Activated CD8-positive, alpha-beta T cell treated with anti-CD3 and anti-CD28 coated beads, Interleukin-2, amount 10 ng/mL, durations not matched to agents 7 days and 5 days (primary cell): ENCODE measurements at regions of chr2 and their contacts with region 1.

Region 1: GRCh38 chr2:113138428-113139322 is 11.3 kb downstream of the IL1RN start:
- DNase-seq: peak; percentile 82
- ATAC-seq: peak; percentile 83
- H3K4me3 Mint-ChIP-seq: peak overlapping the region; percentile 47
- H3K27ac Mint-ChIP-seq: peak overlapping the region; percentile 76
- H3K4me1 Mint-ChIP-seq: peaks cover 34% of the 10 kb centered on the region
- H3K27me3 Mint-ChIP-seq: peaks cover 3% of the 10 kb centered on the region

Region 2: DNA sequence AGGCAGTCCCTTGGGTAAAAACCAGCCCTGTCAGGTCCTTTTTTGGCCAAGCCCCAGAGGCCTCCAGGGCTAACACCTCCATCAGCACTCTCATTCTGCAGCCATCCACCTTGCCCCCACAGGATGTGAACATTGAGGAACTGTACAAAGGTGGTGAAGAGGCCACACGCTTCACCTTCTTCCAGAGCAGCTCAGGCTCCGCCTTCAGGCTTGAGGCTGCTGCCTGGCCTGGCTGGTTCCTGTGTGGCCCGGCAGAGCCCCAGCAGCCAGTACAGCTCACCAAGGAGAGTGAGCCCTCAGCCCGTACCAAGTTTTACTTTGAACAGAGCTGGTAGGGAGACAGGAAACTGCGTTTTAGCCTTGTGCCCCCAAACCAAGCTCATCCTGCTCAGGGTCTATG is 63.6 kb before region 1 on chr2:
- CTCF ChIA-PET with region 1: interaction called, 215 read pairs
- POLR2A ChIA-PET with region 1: no interaction called
- DNase-seq: peak; percentile 71
- ATAC-seq: peak; percentile 97
- H3K4me3 Mint-ChIP-seq: no peak overlapping the region
- H3K27ac Mint-ChIP-seq: peak overlapping the region; percentile 76
- H3K4me1 Mint-ChIP-seq: peaks cover 30% of the 10 kb centered on the region
- H3K27me3 Mint-ChIP-seq: peaks cover under 1% of the 10 kb centered on the region

Region 3: DNA sequence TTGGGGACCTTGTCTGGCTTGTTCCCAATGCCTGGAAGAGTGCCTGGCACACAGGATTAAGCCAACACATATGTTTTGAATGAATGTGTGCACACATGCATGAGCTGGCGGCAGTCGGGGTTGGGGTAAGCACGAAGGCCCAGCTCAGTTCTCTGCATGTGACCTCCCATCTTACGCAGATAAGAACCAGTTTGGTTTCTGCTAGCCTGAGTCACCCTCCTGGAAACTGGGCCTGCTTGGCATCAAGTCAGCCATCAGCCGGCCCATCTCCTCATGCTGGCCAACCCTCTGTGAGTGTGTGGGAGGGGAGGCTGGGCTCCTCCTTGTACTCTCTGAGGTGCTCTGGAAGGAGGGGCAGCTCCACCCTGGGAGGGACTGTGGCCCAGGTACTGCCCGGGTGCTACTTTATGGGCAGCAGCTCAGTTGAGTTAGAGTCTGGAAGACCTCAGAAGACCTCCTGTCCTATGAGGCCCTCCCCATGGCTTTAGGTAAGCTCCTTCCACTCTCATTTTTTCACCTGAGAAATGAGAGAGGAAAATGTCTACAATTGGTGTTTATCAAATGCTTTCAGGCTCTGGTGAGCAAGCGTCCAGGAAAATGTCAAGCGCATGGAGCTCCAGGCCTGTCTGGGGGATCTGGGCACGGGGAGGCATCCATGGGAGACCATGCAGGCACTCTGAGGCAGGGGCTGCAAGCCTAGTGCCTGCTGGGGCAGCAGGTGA is 21.0 kb before region 1 on chr2:
- CTCF ChIA-PET with region 1: interaction called, 45 read pairs
- POLR2A ChIA-PET with region 1: interaction called, 3 read pairs
- DNase-seq: no peak
- ATAC-seq: no peak
- H3K4me3 Mint-ChIP-seq: no peak overlapping the region
- H3K27ac Mint-ChIP-seq: no peak overlapping the region
- H3K4me1 Mint-ChIP-seq: peaks cover 17% of the 10 kb centered on the region
- H3K27me3 Mint-ChIP-seq: peaks cover 10% of the 10 kb centered on the region

Region 4: DNA sequence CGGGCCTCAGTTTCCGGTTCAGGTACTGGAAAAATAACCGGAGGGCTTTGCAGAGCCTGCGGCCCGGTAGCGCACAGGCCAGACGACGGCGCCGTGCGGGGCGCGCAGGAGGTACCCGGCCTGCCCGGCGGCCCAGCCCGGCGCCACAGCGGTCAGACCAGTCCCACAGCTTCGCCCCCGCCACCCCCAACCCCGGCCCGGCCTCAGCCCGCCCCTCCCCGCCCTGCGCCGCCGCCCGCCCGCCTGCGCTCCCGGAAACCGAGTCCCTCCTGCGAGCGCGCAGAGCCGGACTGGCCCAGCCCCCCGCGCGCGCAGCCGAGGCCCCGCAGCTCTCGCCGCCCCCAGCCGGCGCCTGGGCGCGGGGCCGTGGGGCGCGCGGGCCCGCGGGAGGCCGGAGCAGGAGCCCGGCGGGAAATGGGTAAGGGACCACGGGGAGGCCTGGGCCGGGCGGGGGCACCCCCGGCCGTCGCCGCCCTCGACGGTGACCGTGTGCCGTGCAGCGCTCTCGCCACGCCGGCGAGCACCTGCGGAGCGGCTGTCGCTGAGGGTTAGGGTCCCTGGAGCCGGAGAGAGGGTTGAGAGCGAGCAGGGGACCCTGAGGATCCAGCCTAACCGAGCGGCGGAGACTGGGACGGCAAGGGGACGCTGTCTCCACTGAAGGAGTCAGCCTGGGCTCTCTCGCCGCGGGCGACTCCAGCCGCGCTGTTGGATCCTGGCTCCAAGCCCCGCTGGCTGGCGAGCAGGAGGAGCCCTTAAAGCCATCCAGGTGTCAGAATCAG is 18.6 kb after region 1 on chr2:
- CTCF ChIA-PET with region 1: interaction called, 79 read pairs
- POLR2A ChIA-PET with region 1: no interaction called
- DNase-seq: peak; percentile 61
- ATAC-seq: peak; percentile 90
- H3K4me3 Mint-ChIP-seq: peak overlapping the region; percentile 86
- H3K27ac Mint-ChIP-seq: peak overlapping the region; percentile 82
- H3K4me1 Mint-ChIP-seq: peaks cover 33% of the 10 kb centered on the region
- H3K27me3 Mint-ChIP-seq: peaks cover 7% of the 10 kb centered on the region

Region 5: GRCh38 chr2:113203901-113204519 is 65.3 kb after region 1 on chr2:
- CTCF ChIA-PET with region 1: interaction called, 325 read pairs
- POLR2A ChIA-PET with region 1: interaction called, 5 read pairs
- DNase-seq: peak; percentile 86
- ATAC-seq: peak; percentile 80
- H3K4me3 Mint-ChIP-seq: no peak overlapping the region
- H3K27ac Mint-ChIP-seq: peak overlapping the region; percentile 78
- H3K4me1 Mint-ChIP-seq: peaks cover 20% of the 10 kb centered on the region
- H3K27me3 Mint-ChIP-seq: no peaks in the 10 kb centered on the region

Region 6: DNA sequence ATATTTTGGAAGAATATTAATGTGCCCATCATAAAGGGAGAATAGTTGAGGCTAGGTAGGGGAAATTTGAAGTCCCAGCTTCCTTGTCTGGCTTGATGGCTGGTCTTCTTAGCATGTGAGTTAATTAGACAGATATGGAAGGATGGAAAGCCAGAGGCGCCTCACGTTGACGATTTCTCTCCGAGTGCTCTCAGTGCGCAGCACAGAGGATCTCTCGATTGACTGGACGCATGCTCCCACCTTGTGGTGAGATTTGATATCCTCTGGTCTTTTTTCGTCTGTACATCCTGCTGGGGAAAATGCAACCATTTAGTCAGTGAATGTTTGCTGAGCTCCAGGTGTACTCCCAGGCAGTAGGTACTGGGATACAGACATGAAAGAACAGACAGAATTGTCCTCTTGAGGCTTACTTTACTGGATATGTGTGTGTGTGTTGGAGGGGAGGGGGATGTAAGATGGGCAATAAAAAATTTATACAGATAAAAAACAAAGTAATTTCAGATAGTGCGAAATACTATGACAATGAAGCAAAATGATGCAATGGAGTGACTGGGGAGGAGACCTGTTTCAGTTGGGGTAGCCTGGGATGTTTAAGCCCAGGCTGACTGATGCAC is 231.9 kb after region 1 on chr2:
- CTCF ChIA-PET with region 1: interaction called, 10 read pairs
- POLR2A ChIA-PET with region 1: no interaction called
- DNase-seq: peak; percentile 86
- ATAC-seq: peak; percentile 99
- H3K4me3 Mint-ChIP-seq: no peak overlapping the region
- H3K27ac Mint-ChIP-seq: no peak overlapping the region
- H3K4me1 Mint-ChIP-seq: peaks cover 35% of the 10 kb centered on the region
- H3K27me3 Mint-ChIP-seq: peaks cover 11% of the 10 kb centered on the region